ENCODE measurements at regions of chr16 and their contacts with region 1.

Region 1: GRCh38 chr16:23803591-23804123 is 32.1 kb upstream of the PRKCB start:
- DNase-seq: peak; percentile 37 to 95 (median 64)

Region 2: DNA sequence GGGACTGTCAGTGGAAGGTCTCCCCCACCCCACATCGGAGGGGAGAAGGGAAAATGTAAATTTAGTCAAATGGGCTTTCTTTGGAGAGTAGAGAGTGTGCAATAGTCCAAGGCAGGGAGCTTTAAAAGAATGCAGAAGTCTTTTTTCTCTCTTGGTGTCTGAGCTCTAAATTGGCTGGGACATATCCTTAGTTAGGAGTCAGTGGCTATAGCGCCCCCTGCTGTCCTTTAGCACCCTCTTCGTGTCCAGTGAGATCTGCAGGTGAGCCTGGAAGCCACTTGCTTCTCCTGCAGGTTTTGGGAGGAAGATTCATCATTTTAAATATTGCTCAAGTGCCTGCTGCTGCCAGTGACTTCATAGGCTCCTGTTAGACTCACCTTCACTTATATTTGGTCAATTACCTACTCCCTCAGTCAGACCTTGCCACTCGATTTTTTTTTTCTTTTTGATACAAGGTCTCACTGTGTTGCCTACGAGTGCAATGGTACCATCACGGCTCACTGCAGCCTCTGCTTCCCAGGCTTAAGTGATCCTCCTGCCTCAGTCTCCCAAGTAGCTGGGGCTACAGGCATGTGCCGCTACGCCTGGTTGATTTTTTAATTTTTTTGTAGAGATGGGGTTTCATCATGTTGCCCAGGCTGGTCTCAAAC is 206.9 kb after region 1 on chr16:
- intact Hi-C with region 1: loop called (anchors 1 kb)
- DNase-seq: peak; percentile 46 to 96 (median 85)

Region 3: DNA sequence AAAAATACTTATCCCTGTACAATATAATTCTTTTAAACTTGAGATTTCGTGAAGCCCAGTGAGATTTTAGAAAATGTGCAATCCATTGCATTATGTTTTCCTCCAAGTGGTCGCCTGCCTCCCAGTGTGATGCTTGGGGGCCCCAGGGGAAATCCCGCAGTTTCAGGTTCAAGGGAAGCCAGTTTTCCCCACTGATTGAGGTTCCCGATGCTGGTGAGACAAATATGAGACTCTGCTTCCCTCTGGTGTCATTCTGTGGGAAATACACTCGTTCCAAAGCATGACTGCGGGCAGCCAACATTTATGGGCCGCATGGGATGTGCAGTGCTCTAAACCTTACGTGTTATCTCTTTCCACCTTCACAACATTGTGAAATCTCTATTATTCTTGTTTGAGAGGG is 233.0 kb after region 1 on chr16:
- intact Hi-C with region 1: loop called (anchors 2 kb)
- DNase-seq: peak in 6 of 10 donors; percentile 10 to 89 (median 44)

Measured in posterior cingulate gyrus (tissue), 11 donors.